ENCODE measurements at regions of chr17 and their contacts with region 1.

Region 1: GRCh38 chr17:21511363-21512198 is 135.4 kb downstream of the KCNJ12 start:
- DNase-seq: peak; percentile 85
- H3K4me3 ChIP-seq: peak overlapping the region; percentile 34 to 70 (median 40)
- H3K27ac ChIP-seq: peak overlapping the region; percentile 45 to 55 (median 53)
- H3K4me1 ChIP-seq: peaks cover 0 to 20% (median 4%) of the 10 kb centered on the region in 4 donors
- H3K27me3 ChIP-seq: peaks cover 7% of the 10 kb centered on the region
- CTCF ChIP-seq: peak; percentile 69 to 82 (median 73)
- EP300 ChIP-seq: no peak
- POLR2A ChIP-seq: no peak

Region 2: GRCh38 chr17:20922128-20922670 is 589.4 kb before region 1 on chr17:
- in situ Hi-C with region 1: no loop called
- intact Hi-C with region 1: no loop called
- DNase-seq: no peak
- H3K4me3 ChIP-seq: no peak overlapping the region
- H3K27ac ChIP-seq: peak overlapping the region; percentile 25 to 57 (median 40)
- H3K4me1 ChIP-seq: no peaks in the 10 kb centered on the region
- H3K27me3 ChIP-seq: no peaks in the 10 kb centered on the region
- CTCF ChIP-seq: no peak
- EP300 ChIP-seq: no peak
- POLR2A ChIP-seq: no peak

Region 3: DNA sequence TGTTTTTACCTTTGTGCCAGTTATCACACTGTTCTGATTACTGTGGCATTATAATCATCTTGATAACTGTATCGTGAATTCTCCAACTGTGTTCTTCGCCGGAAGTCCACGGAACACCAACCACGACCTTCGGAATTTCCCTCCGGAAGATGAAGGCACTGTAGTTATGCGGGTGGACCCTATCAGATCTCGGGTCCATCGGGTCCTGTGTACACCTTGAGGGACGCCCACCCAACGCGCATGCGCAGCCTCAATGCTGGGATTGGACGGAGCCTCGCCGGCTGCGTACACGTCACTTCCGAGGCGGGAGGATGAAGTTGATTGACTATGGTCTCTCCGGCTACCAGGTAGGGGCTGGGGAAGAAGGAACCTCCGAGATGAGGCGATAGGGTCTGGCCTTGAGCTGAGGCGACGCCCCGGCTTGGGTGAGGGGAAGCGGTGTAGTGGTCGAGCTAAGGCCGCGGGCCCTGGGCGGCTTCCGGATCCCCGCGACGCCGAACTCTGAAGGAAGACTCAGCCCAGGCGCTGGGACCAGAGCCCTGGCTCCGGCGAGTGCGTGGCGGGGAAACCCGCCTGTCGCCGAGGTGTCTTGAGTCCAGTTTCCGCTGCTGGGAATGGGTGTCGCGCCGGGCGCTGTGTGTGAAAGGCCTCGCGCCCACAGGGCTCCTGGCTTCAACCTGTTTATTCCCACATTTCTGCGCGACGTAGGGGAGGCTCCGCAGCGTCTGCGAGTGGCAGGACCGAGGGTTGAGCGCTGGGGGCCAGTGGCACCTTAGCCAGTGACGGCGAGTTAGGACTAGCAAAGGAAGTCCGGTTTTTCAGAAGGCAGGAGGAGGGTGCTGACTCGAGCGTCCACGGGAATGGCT is 384.7 kb before region 1 on chr17 and contains the start of gene DHRS7B:
- in situ Hi-C with region 1: loop called in 3 of 4 experiments (anchors 10 to 25 kb)
- intact Hi-C with region 1: no loop called
- DNase-seq: peak; percentile 98
- H3K4me3 ChIP-seq: peak within 1 kb of the TSS; percentile 67 to 80 (median 75)
- H3K27ac ChIP-seq: peak within 1 kb of the TSS; percentile 94 to 95 (median 94)
- H3K4me1 ChIP-seq: peaks cover 0 to 23% (median 7%) of the 10 kb centered on the region in 4 donors
- H3K27me3 ChIP-seq: no peaks in the 10 kb centered on the region
- CTCF ChIP-seq: no peak
- EP300 ChIP-seq: no peak
- POLR2A ChIP-seq: peak; percentile 90
- total RNA-seq, gene DHRS7B: 14.6 to 80.6 (median 47.7) TPM

Region 4: GRCh38 chr17:21284319-21285163 is 227.0 kb before region 1 on chr17 and contains the start of gene MAP2K3:
- in situ Hi-C with region 1: no loop called
- intact Hi-C with region 1: loop called (anchors 10 kb)
- DNase-seq: peak; percentile 100
- H3K4me3 ChIP-seq: peak within 1 kb of the TSS; percentile 82 to 97 (median 92)
- H3K27ac ChIP-seq: peak within 1 kb of the TSS; percentile 98 to 99 (median 98)
- H3K4me1 ChIP-seq: peaks cover 28 to 53% (median 43%) of the 10 kb centered on the region in 4 donors
- H3K27me3 ChIP-seq: no peaks in the 10 kb centered on the region
- CTCF ChIP-seq: no peak
- EP300 ChIP-seq: no peak
- POLR2A ChIP-seq: peak; percentile 77
- total RNA-seq, gene MAP2K3: 44.4 to 148 (median 59.6) TPM

Region 5: GRCh38 chr17:21457051-21458026 is 54.2 kb before region 1 on chr17:
- in situ Hi-C with region 1: loop called in 2 of 4 experiments (anchors 5 to 10 kb)
- intact Hi-C with region 1: loop called (anchors 2 kb)
- DNase-seq: peak; percentile 94
- H3K4me3 ChIP-seq: no peak overlapping the region
- H3K27ac ChIP-seq: no peak overlapping the region
- H3K4me1 ChIP-seq: peaks cover 0 to 7% (median 2%) of the 10 kb centered on the region in 4 donors
- H3K27me3 ChIP-seq: peaks cover 5% of the 10 kb centered on the region
- CTCF ChIP-seq: peak; percentile 84 to 98 (median 93)
- EP300 ChIP-seq: no peak
- POLR2A ChIP-seq: no peak

Measured in transverse colon (tissue), 4 donors.